ENCODE measurements at regions of chr10 and their contacts with region 1.

Region 1: DNA sequence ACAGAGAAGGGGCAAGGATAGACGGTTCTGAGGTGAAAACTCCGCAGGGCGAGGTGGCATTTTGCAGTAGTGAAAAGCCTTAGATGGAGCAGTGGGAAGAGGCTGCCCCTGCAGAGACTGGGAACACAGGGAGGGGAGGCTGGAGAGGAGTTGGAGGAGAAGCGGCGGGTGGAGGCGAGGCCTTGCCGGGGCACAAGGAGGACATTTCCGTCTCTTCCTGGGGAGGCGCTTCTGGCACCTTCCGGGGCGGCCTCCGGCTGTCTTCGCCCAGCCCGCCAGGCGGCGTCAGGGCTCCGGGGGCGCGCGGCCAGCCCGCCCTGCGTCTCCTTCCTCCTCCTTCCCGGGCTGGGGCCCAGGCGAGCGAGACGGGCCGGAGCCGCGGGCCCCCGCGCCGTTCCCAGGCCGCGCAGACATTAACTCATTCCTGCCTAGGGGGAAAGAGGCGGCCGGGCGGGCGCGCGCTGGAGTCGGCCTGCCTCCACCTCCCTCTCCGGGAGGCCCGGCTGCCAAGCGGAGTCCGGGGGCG is 42.7 kb downstream of the LDB3 start:
- DNase-seq: peak; percentile 81 to 88 (median 87)
- H3K4me3 ChIP-seq: peak overlapping the region in 1 of 2 donors; percentile 64
- H3K4me3 Mint-ChIP-seq: peak overlapping the region; percentile 81 to 96 (median 92)
- H3K27ac ChIP-seq: peak overlapping the region; percentile 75
- H3K27ac Mint-ChIP-seq: peak overlapping the region; percentile 87 to 97 (median 96)
- H3K4me1 ChIP-seq: peaks cover 15% of the 10 kb centered on the region
- H3K4me1 Mint-ChIP-seq: peaks cover 7 to 21% (median 14%) of the 10 kb centered on the region in 4 donors
- H3K27me3 ChIP-seq: no peaks in the 10 kb centered on the region
- H3K27me3 Mint-ChIP-seq: no peaks in the 10 kb centered on the region

Region 2: GRCh38 chr10:86521678-86522509 is 189.2 kb before region 1 on chr10 and contains the start of gene WAPL:
- CTCF ChIA-PET with region 1: no interaction called
- POLR2A ChIA-PET with region 1: no interaction called
- intact Hi-C with region 1: loop called (anchors 5 kb)
- DNase-seq: peak; percentile 93 to 97 (median 94)
- H3K4me3 ChIP-seq: peak within 1 kb of the TSS; percentile 33 to 90
- H3K4me3 Mint-ChIP-seq: peak within 1 kb of the TSS; percentile 95 to 99 (median 98)
- H3K27ac ChIP-seq: peak within 1 kb of the TSS; percentile 86
- H3K27ac Mint-ChIP-seq: peak within 1 kb of the TSS; percentile 79 to 97 (median 96)
- H3K4me1 ChIP-seq: peaks cover 60% of the 10 kb centered on the region
- H3K4me1 Mint-ChIP-seq: peaks cover 41 to 72% (median 57%) of the 10 kb centered on the region in 4 donors
- H3K27me3 ChIP-seq: no peaks in the 10 kb centered on the region
- H3K27me3 Mint-ChIP-seq: no peaks in the 10 kb centered on the region
- total RNA-seq, gene WAPL: 54.0 to 55.2 TPM

Region 3: GRCh38 chr10:86630079-86630478 is 81.0 kb before region 1 on chr10:
- CTCF ChIA-PET with region 1: no interaction called
- POLR2A ChIA-PET with region 1: no interaction called
- intact Hi-C with region 1: no loop called
- DNase-seq: no peak
- H3K4me3 ChIP-seq: no peak overlapping the region
- H3K4me3 Mint-ChIP-seq: no peak overlapping the region
- H3K27ac ChIP-seq: no peak overlapping the region
- H3K27ac Mint-ChIP-seq: no peak overlapping the region
- H3K4me1 ChIP-seq: no peaks in the 10 kb centered on the region
- H3K4me1 Mint-ChIP-seq: peaks cover 0 to 4% (median under 1%) of the 10 kb centered on the region in 4 donors
- H3K27me3 ChIP-seq: no peaks in the 10 kb centered on the region
- H3K27me3 Mint-ChIP-seq: peaks cover 30 to 44% of the 10 kb centered on the region in 2 donors

Region 4: GRCh38 chr10:86688398-86688921 is 22.6 kb before region 1 on chr10:
- CTCF ChIA-PET with region 1: interaction called, 7 read pairs
- POLR2A ChIA-PET with region 1: no interaction called
- intact Hi-C with region 1: loop called (anchors 1 kb)
- DNase-seq: peak; percentile 48 to 55 (median 54)
- H3K4me3 ChIP-seq: no peak overlapping the region
- H3K4me3 Mint-ChIP-seq: peak overlapping the region in 2 of 8 donors; percentile 27 to 48
- H3K27ac ChIP-seq: no peak overlapping the region
- H3K27ac Mint-ChIP-seq: peak overlapping the region in 1 of 7 donors; percentile 6
- H3K4me1 ChIP-seq: no peaks in the 10 kb centered on the region
- H3K4me1 Mint-ChIP-seq: peaks cover 0 to 9% (median 5%) of the 10 kb centered on the region in 4 donors
- H3K27me3 ChIP-seq: no peaks in the 10 kb centered on the region
- H3K27me3 Mint-ChIP-seq: peaks cover 3 to 4% of the 10 kb centered on the region in 2 donors

Region 5: GRCh38 chr10:86755740-86756510 is 44.9 kb after region 1 on chr10:
- CTCF ChIA-PET with region 1: no interaction called
- POLR2A ChIA-PET with region 1: interaction called, 22 read pairs
- intact Hi-C with region 1: loop called (anchors 1 kb)
- DNase-seq: peak; percentile 79 to 90 (median 87)
- H3K4me3 ChIP-seq: peak overlapping the region in 1 of 2 donors; percentile 68
- H3K4me3 Mint-ChIP-seq: peak overlapping the region; percentile 85 to 92 (median 90)
- H3K27ac ChIP-seq: peak overlapping the region; percentile 66
- H3K27ac Mint-ChIP-seq: peak overlapping the region in 6 of 7 donors; percentile 73 to 90 (median 86)
- H3K4me1 ChIP-seq: peaks cover 24% of the 10 kb centered on the region
- H3K4me1 Mint-ChIP-seq: peaks cover 25 to 42% (median 33%) of the 10 kb centered on the region in 4 donors
- H3K27me3 ChIP-seq: no peaks in the 10 kb centered on the region
- H3K27me3 Mint-ChIP-seq: no peaks in the 10 kb centered on the region

Region 6: DNA sequence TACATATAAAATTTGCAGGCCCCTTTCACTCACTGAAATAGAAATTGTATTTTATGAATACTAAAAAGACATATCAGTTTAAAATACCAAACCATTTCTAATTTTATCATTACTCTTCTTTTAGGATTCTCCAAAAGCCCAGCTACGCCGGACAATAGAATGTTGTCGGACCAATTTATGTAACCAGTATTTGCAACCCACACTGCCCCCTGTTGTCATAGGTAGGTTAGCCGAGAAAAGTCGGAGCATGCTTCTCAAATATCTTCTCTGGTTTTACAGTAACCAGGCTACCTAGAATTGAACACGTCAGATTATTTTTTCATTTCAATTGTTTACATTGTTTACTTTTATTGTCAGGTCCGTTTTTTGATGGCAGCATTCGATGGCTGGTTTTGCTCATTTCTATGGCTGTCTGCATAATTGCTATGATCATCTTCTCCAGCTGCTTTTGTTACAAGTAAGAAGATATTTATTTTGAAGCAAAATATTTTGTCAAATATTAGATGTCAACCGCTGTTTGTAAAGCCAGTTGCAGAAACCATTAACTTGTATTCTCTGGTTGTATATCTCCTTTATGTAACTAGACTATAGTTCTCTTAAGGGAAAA is 188.7 kb after region 1 on chr10:
- CTCF ChIA-PET with region 1: no interaction called
- POLR2A ChIA-PET with region 1: no interaction called
- intact Hi-C with region 1: loop called (anchors 1 kb)
- DNase-seq: peak in 4 of 5 donors; percentile 29 to 35 (median 30)
- H3K4me3 ChIP-seq: no peak overlapping the region
- H3K4me3 Mint-ChIP-seq: no peak overlapping the region
- H3K27ac ChIP-seq: no peak overlapping the region
- H3K27ac Mint-ChIP-seq: no peak overlapping the region
- H3K4me1 ChIP-seq: no peaks in the 10 kb centered on the region
- H3K4me1 Mint-ChIP-seq: peaks cover 0 to 1% (median 0%) of the 10 kb centered on the region in 4 donors
- H3K27me3 ChIP-seq: no peaks in the 10 kb centered on the region
- H3K27me3 Mint-ChIP-seq: no peaks in the 10 kb centered on the region

Region 7: DNA sequence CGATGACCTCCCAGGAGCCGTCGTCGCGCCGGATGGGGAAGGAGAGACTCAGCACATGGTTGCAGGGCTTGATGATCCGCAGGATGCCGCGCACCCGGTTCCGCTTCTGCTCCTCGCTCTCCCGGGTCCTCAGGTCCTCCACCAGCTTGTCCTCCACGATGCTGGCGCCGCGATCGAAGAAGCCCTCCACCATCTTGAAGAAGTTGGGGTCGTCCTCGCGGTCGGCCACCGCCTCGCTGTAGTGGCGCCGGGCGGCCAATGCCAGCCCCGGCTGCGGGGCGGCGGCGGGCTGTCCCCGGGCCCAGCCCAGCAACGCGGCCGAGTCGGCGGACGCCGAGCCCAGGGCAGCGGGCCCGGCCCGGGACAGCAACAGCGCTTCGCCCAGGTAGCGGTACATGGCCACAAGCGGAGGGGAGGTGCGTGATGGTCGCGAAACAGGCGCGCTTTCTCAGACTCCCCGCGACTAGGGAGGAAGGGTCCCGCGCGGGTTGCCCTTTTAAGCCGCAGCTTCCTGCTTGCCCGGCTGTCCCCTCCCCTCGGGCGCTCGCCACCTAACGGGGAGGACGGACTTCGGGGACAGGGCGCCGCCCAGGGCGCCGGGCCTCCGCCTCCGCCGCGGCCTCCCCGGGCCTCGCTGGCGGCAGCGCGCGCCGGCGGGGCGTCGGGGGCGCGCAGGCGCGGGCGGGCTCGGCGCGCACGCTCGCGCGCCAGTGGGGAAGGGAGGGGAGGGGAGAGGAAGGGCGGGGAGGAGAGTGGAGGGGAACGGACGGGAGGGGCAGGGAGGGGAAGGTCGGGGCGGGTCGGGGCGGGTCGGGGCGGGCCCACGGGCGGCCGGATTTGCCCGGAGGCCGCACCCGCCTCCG is 383.6 kb after region 1 on chr10 and contains the starts of genes GLUD1 and SHLD2:
- CTCF ChIA-PET with region 1: no interaction called
- POLR2A ChIA-PET with region 1: interaction called, 3 read pairs
- intact Hi-C with region 1: loop called (anchors 2 kb)
- DNase-seq: peak; percentile 86 to 90 (median 88)
- H3K4me3 ChIP-seq: peak within 1 kb of the TSS; percentile 58 to 63
- H3K4me3 Mint-ChIP-seq: peak within 1 kb of the TSS; percentile 91 to 97 (median 94)
- H3K27ac ChIP-seq: peak within 1 kb of the TSS; percentile 86
- H3K27ac Mint-ChIP-seq: peak within 1 kb of the TSS; percentile 93 to 99 (median 95)
- H3K4me1 ChIP-seq: peaks cover 51% of the 10 kb centered on the region
- H3K4me1 Mint-ChIP-seq: peaks cover 41 to 60% (median 50%) of the 10 kb centered on the region in 4 donors
- H3K27me3 ChIP-seq: no peaks in the 10 kb centered on the region
- H3K27me3 Mint-ChIP-seq: no peaks in the 10 kb centered on the region
- total RNA-seq, gene GLUD1: 75.8 to 83.8 TPM
- total RNA-seq, gene SHLD2: 24.0 to 26.5 TPM